BJ (cell line): ENCODE measurements at regions of chrX and their contacts with region 1.

Region 1: DNA sequence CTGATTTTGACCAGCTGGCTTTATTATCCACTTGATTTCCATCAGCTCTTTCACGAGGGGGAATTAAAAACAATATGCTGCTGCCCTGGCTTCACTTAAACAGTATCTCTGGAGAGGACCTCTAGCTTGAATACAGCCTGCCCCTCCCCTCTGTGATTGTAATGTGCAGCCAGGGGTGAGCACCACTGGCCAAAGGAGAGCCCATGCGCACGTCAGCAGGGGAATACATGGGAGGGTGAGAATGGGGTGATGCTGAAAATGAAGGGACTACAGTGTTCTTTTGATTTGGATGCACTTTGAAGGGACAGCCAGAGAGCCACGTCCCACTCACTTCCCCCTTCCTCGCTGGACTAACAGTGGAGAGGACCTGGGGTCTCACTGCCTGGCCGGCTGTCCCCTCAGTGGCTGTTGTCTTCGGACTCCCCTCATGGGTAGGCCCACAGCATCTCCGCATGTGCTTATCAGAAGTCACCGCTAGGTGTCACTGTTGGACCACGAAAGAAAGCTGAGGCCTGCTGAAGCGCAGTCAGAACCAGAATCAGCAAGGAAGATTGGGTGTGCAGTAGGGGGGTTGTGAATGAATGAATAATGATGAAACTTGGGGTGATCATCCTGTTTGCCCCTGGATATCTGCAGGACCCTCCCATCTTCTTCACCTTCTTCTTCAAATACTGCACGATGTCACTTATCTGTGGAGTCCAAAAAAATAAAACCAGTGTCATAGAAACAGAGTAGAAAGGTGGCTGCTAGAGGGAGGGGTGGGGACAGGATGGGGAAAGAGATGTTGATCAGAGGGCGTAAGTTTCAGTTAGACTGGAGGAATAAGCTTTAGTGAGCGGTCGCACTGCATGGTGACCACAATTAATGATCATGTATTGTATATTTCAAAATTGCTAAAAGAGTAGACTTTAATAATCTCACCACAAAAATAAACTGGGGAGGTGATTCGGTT is 32.8 kb downstream of the CLCN4 start:
- DNase-seq: no peak
- H3K4me3 ChIP-seq: no peak overlapping the region
- H3K27me3 ChIP-seq: no peaks in the 10 kb centered on the region
- CTCF ChIP-seq: peak; percentile 51

Region 2: DNA sequence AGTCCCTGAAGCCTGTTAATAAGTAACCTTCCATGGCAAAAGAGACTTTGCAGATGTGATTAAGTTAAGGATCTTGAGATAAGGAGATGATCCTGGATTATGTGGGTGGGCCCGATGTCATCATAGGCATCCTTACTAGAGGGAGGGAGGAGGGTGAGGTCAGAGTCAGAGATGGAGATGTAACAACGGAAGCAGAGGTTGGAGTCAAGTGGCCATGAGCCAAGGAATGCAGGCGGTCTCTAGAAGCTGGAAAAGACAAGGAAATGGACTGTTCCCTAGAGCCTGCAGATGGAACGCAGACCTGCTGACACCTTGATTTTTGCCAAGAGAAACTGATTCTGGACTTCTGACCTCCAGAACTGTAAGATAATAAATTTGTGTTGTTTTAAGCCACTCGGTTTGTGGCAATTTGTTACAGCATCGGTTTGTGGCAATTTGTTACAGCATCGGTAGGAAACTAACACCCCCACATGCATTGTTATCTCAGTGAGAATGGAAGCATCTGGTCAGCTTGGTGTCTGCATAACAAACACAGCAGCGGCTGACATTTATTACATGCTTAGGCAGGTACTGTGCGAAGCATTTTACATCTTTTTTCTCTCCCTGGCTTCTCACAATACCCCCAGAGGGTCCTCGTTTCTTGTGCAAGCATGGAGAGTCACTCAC is 166.9 kb before region 1 on chrX:
- CTCF ChIA-PET with region 1: no interaction called
- POLR2A ChIA-PET with region 1: no interaction called
- DNase-seq: no peak
- H3K4me3 ChIP-seq: no peak overlapping the region
- H3K27me3 ChIP-seq: no peaks in the 10 kb centered on the region
- CTCF ChIP-seq: no peak

Region 3: GRCh38 chrX:10173316-10173900 is 16.2 kb before region 1 on chrX:
- CTCF ChIA-PET with region 1: interaction called, 15 read pairs
- POLR2A ChIA-PET with region 1: no interaction called
- DNase-seq: peak; percentile 30
- H3K4me3 ChIP-seq: no peak overlapping the region
- H3K27me3 ChIP-seq: no peaks in the 10 kb centered on the region; the same call in 1 of the 2 replicates
- CTCF ChIP-seq: no peak

Region 4: DNA sequence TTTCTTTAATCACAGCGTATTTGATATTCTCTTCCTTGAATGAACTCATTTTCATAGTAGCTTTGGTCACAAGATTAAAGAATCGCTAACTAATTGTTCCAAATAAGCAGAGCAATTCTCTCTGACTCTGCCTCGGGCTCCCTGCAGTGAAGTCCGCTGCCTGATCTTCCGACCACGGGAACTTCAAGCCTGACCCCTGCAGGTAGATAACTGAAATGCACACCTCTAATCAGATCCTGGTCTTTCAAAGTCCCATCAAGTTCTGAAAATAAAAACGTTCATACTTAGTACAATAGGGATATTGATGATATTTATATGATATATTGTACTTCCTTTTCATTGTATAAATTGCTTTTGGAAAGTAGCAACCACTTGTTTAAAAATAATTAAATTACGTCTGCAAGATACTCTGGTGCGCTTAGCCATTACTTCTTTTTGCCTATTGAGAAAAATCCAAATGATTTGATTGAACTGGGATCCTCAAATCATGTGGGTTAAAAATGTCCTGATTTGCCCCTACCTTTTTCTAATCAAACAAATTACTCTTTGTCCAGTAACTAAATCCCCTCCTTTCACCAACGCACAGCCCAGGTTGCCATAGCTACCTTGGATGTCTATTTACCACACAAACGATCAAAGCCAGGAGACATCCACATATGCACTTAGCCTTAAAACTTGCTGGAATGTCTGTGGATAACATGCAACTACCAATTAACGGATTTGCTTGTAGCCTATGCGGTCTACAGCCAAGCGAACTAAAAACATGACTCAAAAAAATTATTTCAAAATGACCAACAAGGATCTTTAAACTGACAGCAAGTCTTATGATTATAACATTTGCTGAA is 426.6 kb after region 1 on chrX:
- CTCF ChIA-PET with region 1: interaction called, 14 read pairs
- POLR2A ChIA-PET with region 1: no interaction called
- DNase-seq: peak; percentile 37
- H3K4me3 ChIP-seq: peak overlapping the region; percentile 9
- H3K27me3 ChIP-seq: no peaks in the 10 kb centered on the region
- CTCF ChIP-seq: peak; percentile 64

Region 5: GRCh38 chrX:10636337-10636736 is 446.7 kb after region 1 on chrX:
- CTCF ChIA-PET with region 1: interaction called, 52 read pairs
- POLR2A ChIA-PET with region 1: no interaction called
- DNase-seq: no peak
- H3K4me3 ChIP-seq: no peak overlapping the region
- H3K27me3 ChIP-seq: no peaks in the 10 kb centered on the region
- CTCF ChIP-seq: peak; percentile 68

Region 6: GRCh38 chrX:10722851-10723250 is 533.3 kb after region 1 on chrX:
- CTCF ChIA-PET with region 1: interaction called, 11 read pairs
- POLR2A ChIA-PET with region 1: no interaction called
- DNase-seq: no peak
- H3K4me3 ChIP-seq: no peak overlapping the region
- H3K27me3 ChIP-seq: no peaks in the 10 kb centered on the region
- CTCF ChIP-seq: peak; percentile 66

Region 7: DNA sequence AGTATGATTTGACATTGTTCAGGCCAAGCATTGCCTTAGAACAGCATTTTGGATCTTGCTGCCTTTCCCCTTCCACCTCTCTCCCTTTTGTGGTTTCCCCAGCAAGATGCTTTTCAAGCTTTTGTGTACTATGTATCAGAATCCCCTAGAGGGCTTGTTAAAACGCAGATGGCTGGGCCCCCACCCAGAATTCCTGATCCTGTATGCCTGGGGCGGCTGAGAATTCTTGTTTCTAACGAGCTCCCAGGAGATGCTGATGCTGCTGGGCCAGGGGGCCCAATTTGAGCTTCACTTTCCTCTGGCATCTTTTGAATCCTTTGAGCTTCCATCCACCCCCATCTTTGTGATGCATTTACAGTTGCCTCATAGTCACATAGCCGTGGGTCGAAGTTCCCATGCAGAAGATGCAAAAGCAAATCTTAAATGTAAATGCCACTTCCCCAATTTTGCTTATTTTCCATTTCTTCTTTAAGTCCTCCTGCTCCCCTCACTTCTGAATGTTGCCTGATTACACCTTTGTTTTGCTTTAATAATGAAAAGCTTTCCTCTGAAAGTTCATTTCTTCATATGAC is 940.0 kb after region 1 on chrX:
- CTCF ChIA-PET with region 1: interaction called, 13 read pairs
- POLR2A ChIA-PET with region 1: no interaction called
- DNase-seq: no peak
- H3K4me3 ChIP-seq: no peak overlapping the region
- H3K27me3 ChIP-seq: no peaks in the 10 kb centered on the region
- CTCF ChIP-seq: no peak

Region 8: GRCh38 chrX:11137543-11138139 is 948.0 kb after region 1 on chrX:
- CTCF ChIA-PET with region 1: interaction called, 25 read pairs
- POLR2A ChIA-PET with region 1: no interaction called
- DNase-seq: peak; percentile 19
- H3K4me3 ChIP-seq: no peak overlapping the region
- H3K27me3 ChIP-seq: no peaks in the 10 kb centered on the region
- CTCF ChIP-seq: peak; percentile 46; the same call in 1 of the 2 replicates

Region 9: DNA sequence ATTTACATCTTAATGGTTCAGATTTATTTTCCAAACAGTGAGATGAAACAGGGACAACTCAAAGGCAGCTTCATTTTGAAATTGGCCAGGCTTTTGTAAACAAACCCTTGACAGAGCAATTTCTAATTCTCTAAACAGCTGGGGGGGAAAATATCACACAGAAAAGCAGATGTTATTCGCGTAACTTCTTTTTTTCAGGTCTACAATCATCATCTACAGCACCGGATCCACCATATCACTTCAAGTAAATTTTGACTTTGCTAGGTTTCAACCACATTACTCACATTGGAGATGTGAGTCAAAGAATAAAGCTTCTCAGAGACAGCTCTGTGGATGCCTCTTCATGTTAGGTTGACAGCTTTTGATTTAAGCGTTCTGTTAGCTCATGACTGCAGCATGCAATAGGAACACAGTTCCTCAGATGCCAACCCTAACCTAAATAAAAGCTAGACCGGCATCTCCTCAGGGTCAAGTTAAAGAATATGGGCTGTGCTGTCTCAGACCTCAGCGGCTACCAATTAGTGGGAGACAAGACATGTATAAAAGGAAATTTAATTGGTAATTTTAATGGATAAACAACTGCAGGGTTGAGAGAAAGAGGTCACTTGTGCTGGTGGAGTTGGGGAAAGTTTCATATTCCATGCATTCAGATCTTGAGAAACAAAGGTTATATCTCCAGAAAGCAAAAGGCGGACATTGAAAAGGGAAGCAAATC is 1130.4 kb after region 1 on chrX:
- CTCF ChIA-PET with region 1: no interaction called
- POLR2A ChIA-PET with region 1: no interaction called
- DNase-seq: no peak
- H3K4me3 ChIP-seq: no peak overlapping the region
- H3K27me3 ChIP-seq: no peaks in the 10 kb centered on the region
- CTCF ChIP-seq: no peak